MCF 10A (cell line): ENCODE measurements at regions of chr11 and their contacts with region 1.

Region 1: DNA sequence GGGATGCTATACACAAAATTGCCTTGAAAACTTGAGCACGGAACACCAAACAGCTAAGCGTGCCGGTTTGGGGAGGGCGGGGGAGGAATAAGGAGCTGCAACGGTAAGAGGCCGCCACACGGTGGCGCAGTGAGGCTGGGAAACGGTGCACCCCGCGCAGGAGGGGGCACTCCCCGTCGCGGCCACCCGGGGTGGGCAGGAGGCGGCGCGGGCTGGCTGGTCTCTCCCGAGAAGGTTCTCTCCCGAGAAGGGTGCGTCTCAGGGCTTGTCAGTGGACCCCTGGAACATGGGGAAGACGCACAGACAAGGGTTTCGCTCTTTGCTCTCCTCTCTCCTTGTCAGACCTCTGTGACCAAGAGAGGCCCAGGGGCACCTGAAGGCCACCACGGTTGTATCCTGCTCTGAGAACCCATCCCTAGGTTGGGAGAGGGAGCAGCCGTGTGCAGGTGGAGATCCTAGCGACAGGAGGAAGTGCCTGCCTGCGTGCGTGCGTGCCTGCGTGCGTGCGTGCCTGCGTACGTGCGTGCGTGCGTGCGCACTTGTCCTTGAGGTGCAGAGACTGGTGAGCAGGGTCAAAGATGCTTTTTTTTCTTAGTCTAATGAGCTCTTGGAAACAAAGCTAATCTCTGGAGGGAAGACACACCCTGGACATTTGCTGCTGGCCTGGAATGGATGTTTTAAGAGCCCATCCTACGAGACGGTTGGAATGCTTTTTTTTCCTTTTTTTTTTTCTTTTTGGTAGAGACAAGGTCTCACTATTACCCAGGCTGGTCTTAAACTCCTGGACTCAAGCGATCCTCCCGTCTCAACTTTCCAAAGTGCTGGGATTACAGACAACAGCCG is 18.1 kb upstream of the JAM3 start:
- DNase-seq: peak; percentile 68
- H3K4me3 Mint-ChIP-seq: no peak overlapping the region
- H3K27ac Mint-ChIP-seq: no peak overlapping the region
- H3K4me1 Mint-ChIP-seq: peaks cover 21% of the 10 kb centered on the region
- H3K27me3 Mint-ChIP-seq: no peaks in the 10 kb centered on the region
- CTCF ChIP-seq: peak; percentile 92

Region 2: GRCh38 chr11:133842053-133842452 is 208.7 kb before region 1 on chr11:
- CTCF ChIA-PET with region 1: no interaction called
- POLR2A ChIA-PET with region 1: no interaction called
- intact Hi-C with region 1: no loop called
- DNase-seq: no peak
- H3K4me3 Mint-ChIP-seq: no peak overlapping the region
- H3K27ac Mint-ChIP-seq: no peak overlapping the region
- H3K4me1 Mint-ChIP-seq: no peaks in the 10 kb centered on the region
- H3K27me3 Mint-ChIP-seq: peaks cover 39% of the 10 kb centered on the region
- CTCF ChIP-seq: no peak

Region 3: GRCh38 chr11:133905677-133906156 is 145.0 kb before region 1 on chr11:
- CTCF ChIA-PET with region 1: no interaction called
- POLR2A ChIA-PET with region 1: no interaction called
- intact Hi-C with region 1: no loop called
- DNase-seq: no peak
- H3K4me3 Mint-ChIP-seq: no peak overlapping the region
- H3K27ac Mint-ChIP-seq: no peak overlapping the region
- H3K4me1 Mint-ChIP-seq: no peaks in the 10 kb centered on the region
- H3K27me3 Mint-ChIP-seq: no peaks in the 10 kb centered on the region
- CTCF ChIP-seq: no peak

Region 4: GRCh38 chr11:133927690-133928627 is 122.8 kb before region 1 on chr11:
- CTCF ChIA-PET with region 1: interaction called, 109 read pairs
- POLR2A ChIA-PET with region 1: interaction called, 24 read pairs
- intact Hi-C with region 1: loop called (anchors 1 kb)
- DNase-seq: peak; percentile 78
- H3K4me3 Mint-ChIP-seq: peak overlapping the region; percentile 69
- H3K27ac Mint-ChIP-seq: peak overlapping the region; percentile 71
- H3K4me1 Mint-ChIP-seq: peaks cover 18% of the 10 kb centered on the region
- H3K27me3 Mint-ChIP-seq: no peaks in the 10 kb centered on the region
- CTCF ChIP-seq: peak; percentile 98

Region 5: DNA sequence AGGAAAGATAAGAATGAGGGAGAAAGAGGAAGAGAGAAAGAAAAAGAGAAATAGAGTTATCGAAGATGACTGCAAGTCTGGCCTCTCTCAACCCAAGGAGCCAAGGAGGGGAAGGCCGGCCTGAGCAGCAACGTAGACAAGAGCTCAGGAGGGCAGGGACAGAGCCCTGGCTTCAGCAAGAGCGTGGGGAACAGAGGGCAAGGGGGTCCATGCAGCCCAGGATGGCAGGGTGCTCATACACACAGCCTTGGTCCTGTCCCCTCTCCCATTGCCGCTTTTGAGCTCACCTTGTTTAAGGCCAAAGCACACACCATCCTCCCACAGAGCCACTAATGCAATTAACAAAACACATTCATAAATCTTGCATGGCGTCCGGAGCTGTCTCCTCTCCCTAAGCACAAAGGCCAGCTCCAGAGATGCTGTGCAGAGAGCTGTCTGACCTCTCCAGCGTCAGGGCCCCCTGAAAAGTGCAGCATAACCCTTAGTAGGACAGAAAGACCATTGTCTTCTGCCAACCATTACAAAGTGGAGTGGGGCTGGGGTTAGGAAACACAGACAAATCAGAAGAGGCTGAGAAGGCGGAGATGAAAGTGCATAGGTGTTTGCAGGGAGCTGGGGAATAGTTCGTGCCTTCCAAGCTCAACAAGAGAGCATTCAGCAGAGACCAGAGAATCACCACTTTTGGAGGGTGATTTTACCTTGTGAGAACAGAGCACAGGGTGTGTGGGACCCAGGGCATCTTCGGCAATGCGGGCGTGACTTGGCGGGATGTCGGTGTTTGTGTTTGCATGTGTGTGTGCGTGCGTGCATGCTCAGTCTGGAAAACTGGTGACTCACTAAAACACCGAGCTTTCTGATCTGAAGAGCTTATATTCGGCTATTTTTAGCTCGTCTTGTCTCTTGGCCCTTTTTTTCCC is 10.1 kb before region 1 on chr11:
- CTCF ChIA-PET with region 1: interaction called, 30 read pairs
- POLR2A ChIA-PET with region 1: interaction called, 27 read pairs
- intact Hi-C with region 1: no loop called
- DNase-seq: peak; percentile 81
- H3K4me3 Mint-ChIP-seq: peak overlapping the region; percentile 13
- H3K27ac Mint-ChIP-seq: peak overlapping the region; percentile 84
- H3K4me1 Mint-ChIP-seq: peaks cover 36% of the 10 kb centered on the region
- H3K27me3 Mint-ChIP-seq: no peaks in the 10 kb centered on the region
- CTCF ChIP-seq: no peak

Region 6: DNA sequence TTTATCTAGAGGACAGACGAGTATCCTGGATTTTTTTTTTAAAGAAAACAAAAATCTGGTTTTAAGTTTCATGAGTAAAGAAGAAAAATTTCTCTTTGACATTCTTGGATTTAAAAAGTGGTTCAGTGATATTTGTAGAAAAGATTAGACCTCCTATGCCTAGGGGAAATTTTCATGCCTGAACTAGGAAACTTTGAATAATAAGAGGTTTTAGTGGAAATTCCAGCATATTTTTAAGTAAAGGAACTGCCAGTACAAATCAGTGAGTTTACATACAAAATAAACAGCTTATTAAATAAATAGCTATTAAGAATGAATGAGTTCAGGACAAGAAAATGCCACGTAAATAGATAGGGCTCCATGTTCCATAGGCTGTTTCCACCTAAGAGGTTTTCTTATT is 35.6 kb after region 1 on chr11:
- CTCF ChIA-PET with region 1: interaction called, 18 read pairs
- POLR2A ChIA-PET with region 1: no interaction called
- intact Hi-C with region 1: no loop called
- DNase-seq: no peak
- H3K4me3 Mint-ChIP-seq: no peak overlapping the region
- H3K27ac Mint-ChIP-seq: no peak overlapping the region
- H3K4me1 Mint-ChIP-seq: no peaks in the 10 kb centered on the region
- H3K27me3 Mint-ChIP-seq: no peaks in the 10 kb centered on the region
- CTCF ChIP-seq: no peak

Region 7: DNA sequence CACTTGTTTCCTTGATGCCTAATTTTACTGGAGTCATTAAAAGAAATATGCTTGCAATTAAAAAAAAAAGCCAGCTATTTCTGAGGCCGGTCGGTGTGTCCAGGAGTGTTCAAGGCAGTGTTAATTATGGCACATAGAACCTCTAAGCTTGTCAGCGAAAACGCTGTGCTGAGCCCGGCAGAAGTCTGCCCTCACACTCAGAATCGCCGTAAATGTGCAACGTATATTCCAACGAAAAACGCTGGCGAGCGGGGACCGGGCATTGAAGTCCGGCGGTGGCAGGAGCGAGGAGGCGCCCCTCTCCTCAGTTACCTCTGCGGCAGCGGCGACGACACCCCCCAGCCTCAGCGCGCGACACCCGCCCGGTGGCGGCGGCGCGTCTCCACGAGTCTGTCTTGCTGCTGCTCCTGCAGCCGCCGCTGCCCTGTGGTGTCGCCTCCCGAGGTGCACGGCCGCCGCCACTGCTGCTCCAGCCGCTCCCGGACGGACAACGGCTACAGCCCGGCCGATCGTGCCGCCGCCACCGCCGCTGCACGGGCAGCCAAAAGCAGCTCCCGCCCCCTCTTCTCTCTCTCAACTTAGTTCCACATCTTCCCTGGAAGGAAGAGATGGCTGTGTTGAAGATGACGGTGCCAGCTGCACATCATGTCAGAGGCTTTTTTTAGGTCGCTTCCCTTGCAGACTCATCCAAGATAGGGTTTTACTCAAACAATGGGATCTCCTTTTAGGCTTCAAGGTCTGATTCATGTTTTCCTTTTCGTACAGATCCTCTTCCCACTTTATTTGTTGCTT is 74.1 kb after region 1 on chr11:
- CTCF ChIA-PET with region 1: interaction called, 12 read pairs
- POLR2A ChIA-PET with region 1: interaction called, 6 read pairs
- intact Hi-C with region 1: no loop called
- DNase-seq: no peak
- H3K4me3 Mint-ChIP-seq: peak overlapping the region; percentile 25
- H3K27ac Mint-ChIP-seq: no peak overlapping the region
- H3K4me1 Mint-ChIP-seq: peaks cover 16% of the 10 kb centered on the region
- H3K27me3 Mint-ChIP-seq: peaks cover 12% of the 10 kb centered on the region
- CTCF ChIP-seq: no peak

Region 8: GRCh38 chr11:134150195-134150903 is 99.6 kb after region 1 on chr11:
- CTCF ChIA-PET with region 1: interaction called, 10 read pairs
- POLR2A ChIA-PET with region 1: interaction called, 4 read pairs
- intact Hi-C with region 1: no loop called
- DNase-seq: no peak
- H3K4me3 Mint-ChIP-seq: no peak overlapping the region
- H3K27ac Mint-ChIP-seq: no peak overlapping the region
- H3K4me1 Mint-ChIP-seq: no peaks in the 10 kb centered on the region
- H3K27me3 Mint-ChIP-seq: no peaks in the 10 kb centered on the region
- CTCF ChIP-seq: no peak